Activated CD8-positive, alpha-beta memory T cell treated with anti-CD3 and anti-CD28 coated beads, Interleukin-2, amount 10 ng/mL, durations not matched to agents 7 days and 5 days (primary cell): ENCODE measurements at regions of chr2 and their contacts with region 1.

Region 1: DNA sequence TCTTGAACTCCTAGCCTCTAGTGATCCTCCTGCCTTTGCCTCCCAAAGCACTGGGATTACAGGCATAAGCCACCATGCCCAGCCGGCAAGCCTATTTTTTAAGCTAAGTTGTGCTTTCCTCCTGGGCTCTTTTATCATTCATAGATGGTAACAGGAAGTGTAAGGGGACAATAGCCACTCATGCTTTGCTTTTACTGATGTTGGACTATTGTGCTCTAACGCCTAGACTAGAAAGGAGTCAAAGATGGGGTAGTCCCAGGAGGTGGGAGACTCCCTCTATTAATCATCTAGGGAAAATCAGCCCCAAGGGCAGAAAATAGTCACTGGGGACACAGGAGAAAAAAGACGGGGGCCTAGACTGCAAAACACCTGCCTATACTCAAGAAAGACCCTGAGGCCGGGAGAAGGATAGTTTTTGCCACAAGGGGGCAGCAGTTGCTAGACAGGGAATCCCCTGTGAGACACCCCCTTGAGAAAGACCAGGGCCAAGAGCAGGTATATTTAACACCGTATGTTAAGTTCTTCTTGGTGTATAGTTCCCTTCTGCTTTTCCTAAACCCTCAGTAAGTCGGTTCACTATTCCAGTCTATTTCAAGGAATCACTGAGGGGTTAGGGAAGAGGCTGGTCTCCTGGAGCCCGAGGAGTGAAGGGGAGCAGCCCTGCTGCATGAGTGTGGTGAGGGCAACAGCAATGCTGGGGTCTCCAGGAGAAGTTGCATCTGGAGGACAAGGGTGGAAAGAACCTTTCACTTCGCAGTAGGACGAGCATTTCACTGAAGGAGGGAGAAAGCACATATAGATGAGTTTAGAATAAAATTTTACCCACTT is 2.1 kb upstream of the CXCR1 start:
- DNase-seq: peak; percentile 82
- ATAC-seq: peak; percentile 74
- H3K4me3 Mint-ChIP-seq: no peak overlapping the region
- H3K27ac Mint-ChIP-seq: no peak overlapping the region
- H3K4me1 Mint-ChIP-seq: peaks cover 20% of the 10 kb centered on the region
- H3K27me3 Mint-ChIP-seq: peaks cover 37% of the 10 kb centered on the region

Region 2: GRCh38 chr2:217993817-217994463 is 174.9 kb before region 1 on chr2:
- CTCF ChIA-PET with region 1: no interaction called
- DNase-seq: peak; percentile 66
- ATAC-seq: peak; percentile 74
- H3K4me3 Mint-ChIP-seq: no peak overlapping the region
- H3K27ac Mint-ChIP-seq: no peak overlapping the region
- H3K4me1 Mint-ChIP-seq: peaks cover 4% of the 10 kb centered on the region
- H3K27me3 Mint-ChIP-seq: peaks cover 2% of the 10 kb centered on the region

Region 3: DNA sequence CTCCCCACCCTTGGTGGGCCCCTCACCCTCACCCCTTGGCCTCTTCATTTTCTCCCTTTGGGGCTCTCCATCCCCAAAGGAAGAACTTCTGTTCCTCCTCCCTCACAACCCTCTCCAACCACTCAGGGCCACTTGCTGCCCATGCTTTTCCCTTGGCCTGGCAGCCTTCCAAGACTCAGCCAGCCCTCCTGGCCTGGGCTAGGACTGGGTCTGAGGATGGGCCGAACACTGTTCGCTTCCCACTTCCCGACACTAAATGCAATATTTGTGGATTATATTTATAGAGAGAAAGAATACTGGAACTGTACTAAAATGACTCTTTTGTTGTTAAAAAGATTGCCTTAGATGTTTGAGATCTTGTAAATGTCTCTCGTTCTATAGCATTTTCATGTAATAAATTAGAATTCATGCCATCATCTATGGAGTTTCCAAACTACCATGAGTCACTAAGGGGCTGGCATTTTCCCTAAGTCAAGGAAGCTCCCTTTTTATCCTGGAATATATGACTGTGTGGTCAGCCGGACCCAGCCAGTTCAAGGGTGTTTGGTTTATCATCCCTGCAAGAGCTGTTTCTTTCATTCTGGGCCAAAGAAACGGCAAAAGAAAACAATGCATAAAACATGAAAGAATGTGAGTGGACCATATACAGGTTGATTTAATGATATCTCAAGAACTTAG is 39.3 kb before region 1 on chr2:
- CTCF ChIA-PET with region 1: no interaction called
- DNase-seq: no peak
- ATAC-seq: no peak
- H3K4me3 Mint-ChIP-seq: no peak overlapping the region
- H3K27ac Mint-ChIP-seq: no peak overlapping the region
- H3K4me1 Mint-ChIP-seq: peaks cover 10% of the 10 kb centered on the region
- H3K27me3 Mint-ChIP-seq: peaks cover 31% of the 10 kb centered on the region

Region 4: GRCh38 chr2:218152765-218153164 is 16.1 kb before region 1 on chr2:
- CTCF ChIA-PET with region 1: interaction called, 10 read pairs
- DNase-seq: no peak
- ATAC-seq: no peak
- H3K4me3 Mint-ChIP-seq: no peak overlapping the region
- H3K27ac Mint-ChIP-seq: no peak overlapping the region
- H3K4me1 Mint-ChIP-seq: peaks cover 10% of the 10 kb centered on the region
- H3K27me3 Mint-ChIP-seq: peaks cover 26% of the 10 kb centered on the region

Region 5: DNA sequence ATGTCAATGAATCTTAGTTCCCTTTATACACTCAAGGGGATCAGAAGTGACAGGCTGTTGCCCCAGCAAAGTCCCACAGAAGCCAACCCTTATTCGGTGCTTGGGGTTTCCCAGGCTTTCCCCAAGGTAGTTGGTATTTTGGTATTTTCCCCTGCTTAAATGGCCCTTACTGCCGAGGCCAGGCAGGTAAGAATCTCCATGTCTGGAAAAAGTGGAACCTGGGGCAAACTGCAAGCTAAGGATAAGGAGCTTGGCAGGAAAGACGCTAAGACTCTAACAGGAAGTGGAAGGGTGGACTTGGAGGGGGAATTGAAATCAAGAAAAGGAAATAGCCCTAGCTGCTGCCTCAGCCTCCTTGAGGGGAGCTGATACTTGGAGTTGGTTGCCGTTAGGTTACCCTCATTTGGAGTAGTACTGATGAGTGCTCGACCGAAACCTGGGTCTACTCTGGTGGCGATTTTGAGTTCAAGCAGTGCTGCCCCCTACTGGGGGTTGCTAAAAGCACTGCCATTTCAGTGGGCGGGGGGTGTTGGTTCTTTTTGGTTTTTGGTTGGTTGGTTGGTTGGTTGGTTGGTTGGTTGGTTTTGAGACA is 88.6 kb after region 1 on chr2:
- CTCF ChIA-PET with region 1: interaction called, 21 read pairs
- DNase-seq: peak; percentile 81
- ATAC-seq: peak; percentile 80
- H3K4me3 Mint-ChIP-seq: peak overlapping the region; percentile 8
- H3K27ac Mint-ChIP-seq: peak overlapping the region; percentile 86
- H3K4me1 Mint-ChIP-seq: peaks cover 20% of the 10 kb centered on the region
- H3K27me3 Mint-ChIP-seq: no peaks in the 10 kb centered on the region